ENCODE measurements at regions of chrX and their contacts with region 1.

Region 1: GRCh38 chrX:118627084-118627758 is 100.2 kb upstream of the IL13RA1 start:
- DNase-seq: peak; percentile 51
- H3K4me3 Mint-ChIP-seq: no peak overlapping the region
- H3K27ac Mint-ChIP-seq: no peak overlapping the region
- H3K4me1 Mint-ChIP-seq: no peaks in the 10 kb centered on the region
- H3K27me3 Mint-ChIP-seq: no peaks in the 10 kb centered on the region
- CTCF ChIP-seq: peak; percentile 46

Region 2: DNA sequence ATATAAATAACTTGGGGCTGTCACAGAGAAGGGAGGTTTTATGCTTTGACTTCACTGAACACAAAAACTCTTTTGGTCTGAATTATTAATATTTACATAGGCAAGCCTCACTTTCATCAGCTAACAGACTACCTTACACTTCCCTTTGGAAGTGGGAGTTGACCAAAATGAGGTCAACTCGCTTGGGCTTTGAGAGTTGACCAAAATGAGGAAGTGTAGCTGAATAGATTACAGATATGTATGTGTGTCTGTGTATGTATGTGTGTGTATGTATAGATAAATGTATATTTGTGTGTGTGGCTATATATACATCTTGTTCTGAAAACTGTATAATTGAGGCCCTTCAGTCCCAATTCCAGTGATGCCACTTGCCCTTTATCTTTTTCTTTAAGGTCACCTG is 13.1 kb before region 1 on chrX:
- CTCF ChIA-PET with region 1: interaction called, 34 read pairs
- POLR2A ChIA-PET with region 1: no interaction called
- intact Hi-C with region 1: no loop called
- DNase-seq: no peak
- H3K4me3 Mint-ChIP-seq: no peak overlapping the region
- H3K27ac Mint-ChIP-seq: no peak overlapping the region
- H3K4me1 Mint-ChIP-seq: no peaks in the 10 kb centered on the region
- H3K27me3 Mint-ChIP-seq: peaks cover 22% of the 10 kb centered on the region
- CTCF ChIP-seq: no peak

Region 3: GRCh38 chrX:118637997-118638396 is 10.8 kb after region 1 on chrX:
- CTCF ChIA-PET with region 1: interaction called, 24 read pairs
- POLR2A ChIA-PET with region 1: interaction called, 3 read pairs
- intact Hi-C with region 1: no loop called
- DNase-seq: peak; percentile 30
- H3K4me3 Mint-ChIP-seq: no peak overlapping the region
- H3K27ac Mint-ChIP-seq: no peak overlapping the region
- H3K4me1 Mint-ChIP-seq: no peaks in the 10 kb centered on the region
- H3K27me3 Mint-ChIP-seq: peaks cover 27% of the 10 kb centered on the region
- CTCF ChIP-seq: no peak

Region 4: DNA sequence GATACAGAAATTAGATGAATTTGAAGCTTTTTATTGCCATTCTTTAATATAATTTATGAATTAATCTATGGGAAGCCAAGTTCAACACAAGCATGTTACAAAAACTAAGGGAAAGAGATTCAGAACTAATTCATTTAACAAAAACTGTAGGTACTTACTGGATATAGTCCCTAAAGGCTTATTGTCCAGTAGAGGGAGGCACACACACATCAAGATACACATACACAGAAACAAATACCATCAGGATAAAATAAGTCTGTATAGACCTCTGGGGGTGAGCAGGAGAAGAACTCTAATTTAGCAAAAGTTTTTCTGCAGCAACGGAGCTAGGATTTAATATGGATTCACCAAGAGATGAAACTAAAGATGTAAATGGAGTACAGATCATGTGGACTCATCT is 17.2 kb after region 1 on chrX:
- CTCF ChIA-PET with region 1: interaction called, 16 read pairs
- POLR2A ChIA-PET with region 1: interaction called, 3 read pairs
- intact Hi-C with region 1: no loop called
- DNase-seq: peak; percentile 50
- H3K4me3 Mint-ChIP-seq: no peak overlapping the region
- H3K27ac Mint-ChIP-seq: no peak overlapping the region
- H3K4me1 Mint-ChIP-seq: no peaks in the 10 kb centered on the region
- H3K27me3 Mint-ChIP-seq: peaks cover 15% of the 10 kb centered on the region
- CTCF ChIP-seq: peak; percentile 47

Region 5: GRCh38 chrX:119067023-119067739 is 440.0 kb after region 1 on chrX:
- CTCF ChIA-PET with region 1: interaction called, 7 read pairs
- POLR2A ChIA-PET with region 1: no interaction called
- intact Hi-C with region 1: loop called (anchors 1 kb)
- DNase-seq: peak; percentile 65
- H3K4me3 Mint-ChIP-seq: no peak overlapping the region
- H3K27ac Mint-ChIP-seq: no peak overlapping the region
- H3K4me1 Mint-ChIP-seq: no peaks in the 10 kb centered on the region
- H3K27me3 Mint-ChIP-seq: peaks cover 25% of the 10 kb centered on the region
- CTCF ChIP-seq: peak; percentile 66

Region 6: DNA sequence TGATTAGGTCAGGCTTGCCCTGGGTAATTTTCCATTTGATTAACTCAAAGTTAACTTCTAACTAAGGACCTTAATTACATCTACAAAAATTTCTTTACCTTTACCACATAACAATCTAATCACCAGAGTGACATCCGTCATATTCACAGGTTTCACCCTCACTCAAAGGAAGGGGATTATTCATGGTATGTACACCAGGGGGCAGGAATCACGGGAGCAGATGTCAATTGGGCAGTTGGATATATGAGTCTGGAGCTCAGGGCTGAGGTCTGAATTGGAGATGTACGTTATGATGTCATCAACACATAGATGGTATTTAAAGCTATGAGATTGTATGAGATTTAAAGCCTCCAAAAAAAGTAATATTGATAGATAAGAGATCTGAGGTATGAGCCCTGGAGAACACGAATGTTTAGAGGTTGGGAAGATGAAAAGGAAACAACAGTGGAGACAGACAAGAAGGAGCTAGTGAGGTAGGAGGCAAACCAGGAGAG is 661.7 kb after region 1 on chrX:
- CTCF ChIA-PET with region 1: no interaction called
- POLR2A ChIA-PET with region 1: no interaction called
- intact Hi-C with region 1: no loop called
- DNase-seq: no peak
- H3K4me3 Mint-ChIP-seq: no peak overlapping the region
- H3K27ac Mint-ChIP-seq: no peak overlapping the region
- H3K4me1 Mint-ChIP-seq: no peaks in the 10 kb centered on the region
- H3K27me3 Mint-ChIP-seq: peaks cover 41% of the 10 kb centered on the region
- CTCF ChIP-seq: peak; percentile 13

Measured in MCF 10A (cell line).